ENCODE measurements at regions of chr10 and their contacts with region 1.

Region 1: GRCh38 chr10:102009801-102010425 is 46.1 kb downstream of the ARMH3 start:
- DNase-seq: peak; percentile 72
- CTCF ChIP-seq: peak; percentile 94

Region 2: GRCh38 chr10:101830322-101831168 is 179.4 kb before region 1 on chr10:
- CTCF ChIA-PET with region 1: interaction called, 831 read pairs
- POLR2A ChIA-PET with region 1: no interaction called
- DNase-seq: peak; percentile 88
- CTCF ChIP-seq: no peak

Region 3: DNA sequence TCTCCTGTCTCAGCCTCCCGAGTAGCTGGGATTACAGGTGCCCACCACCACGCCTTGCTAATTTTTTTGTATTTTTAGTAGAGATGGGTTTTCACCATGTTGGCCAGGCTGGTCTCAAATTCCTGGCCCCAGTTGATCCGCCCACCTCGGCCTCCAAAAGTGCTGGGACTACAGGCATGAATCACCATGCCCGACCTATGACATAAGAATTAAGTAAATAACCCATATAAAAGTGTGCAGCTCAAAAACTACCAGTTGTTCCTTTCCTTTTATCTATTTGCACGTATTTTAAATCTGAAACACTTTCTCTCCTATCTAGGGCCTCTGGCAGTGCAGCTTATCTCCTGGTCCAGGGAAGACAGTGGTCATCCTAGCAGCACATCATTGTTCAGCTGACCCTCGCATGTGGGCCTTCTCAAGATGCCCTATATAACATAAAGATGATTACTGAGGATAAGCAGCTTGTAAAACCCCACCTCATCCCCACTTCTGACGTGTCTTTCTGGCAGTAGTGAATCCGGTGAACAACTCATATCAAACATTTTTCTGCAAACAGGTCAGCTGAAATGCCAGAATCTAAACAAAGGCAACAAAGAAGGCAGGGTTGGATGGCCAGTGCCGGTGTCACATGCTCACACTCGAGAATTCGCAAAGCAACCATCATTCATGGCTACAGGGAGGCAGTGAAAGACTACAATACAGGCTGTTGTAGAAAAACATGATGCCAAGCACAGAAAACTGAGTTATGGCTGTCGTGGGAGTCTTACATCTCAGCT is 130.3 kb before region 1 on chr10:
- CTCF ChIA-PET with region 1: interaction called, 30 read pairs
- POLR2A ChIA-PET with region 1: no interaction called
- DNase-seq: no peak
- CTCF ChIP-seq: no peak

Region 4: DNA sequence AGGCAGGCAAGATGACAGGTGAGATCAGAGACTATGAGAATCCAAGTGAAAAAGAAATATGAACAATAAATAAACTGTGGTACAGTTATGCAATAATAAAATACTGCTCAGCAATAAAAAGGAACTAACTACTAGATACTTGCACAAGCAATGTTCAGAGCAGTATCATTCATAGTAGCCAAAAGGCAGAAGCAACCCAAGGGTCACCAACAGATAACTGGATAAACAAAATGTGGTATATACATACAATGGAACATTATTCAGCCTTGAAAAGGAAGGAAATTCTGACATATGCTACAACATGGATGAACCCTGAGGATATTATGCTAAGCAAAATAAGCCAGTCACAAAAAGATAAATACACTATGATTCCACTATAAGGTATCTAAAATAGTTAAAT is 89.4 kb before region 1 on chr10:
- CTCF ChIA-PET with region 1: interaction called, 11 read pairs
- POLR2A ChIA-PET with region 1: no interaction called
- DNase-seq: no peak
- CTCF ChIP-seq: no peak

Region 5: DNA sequence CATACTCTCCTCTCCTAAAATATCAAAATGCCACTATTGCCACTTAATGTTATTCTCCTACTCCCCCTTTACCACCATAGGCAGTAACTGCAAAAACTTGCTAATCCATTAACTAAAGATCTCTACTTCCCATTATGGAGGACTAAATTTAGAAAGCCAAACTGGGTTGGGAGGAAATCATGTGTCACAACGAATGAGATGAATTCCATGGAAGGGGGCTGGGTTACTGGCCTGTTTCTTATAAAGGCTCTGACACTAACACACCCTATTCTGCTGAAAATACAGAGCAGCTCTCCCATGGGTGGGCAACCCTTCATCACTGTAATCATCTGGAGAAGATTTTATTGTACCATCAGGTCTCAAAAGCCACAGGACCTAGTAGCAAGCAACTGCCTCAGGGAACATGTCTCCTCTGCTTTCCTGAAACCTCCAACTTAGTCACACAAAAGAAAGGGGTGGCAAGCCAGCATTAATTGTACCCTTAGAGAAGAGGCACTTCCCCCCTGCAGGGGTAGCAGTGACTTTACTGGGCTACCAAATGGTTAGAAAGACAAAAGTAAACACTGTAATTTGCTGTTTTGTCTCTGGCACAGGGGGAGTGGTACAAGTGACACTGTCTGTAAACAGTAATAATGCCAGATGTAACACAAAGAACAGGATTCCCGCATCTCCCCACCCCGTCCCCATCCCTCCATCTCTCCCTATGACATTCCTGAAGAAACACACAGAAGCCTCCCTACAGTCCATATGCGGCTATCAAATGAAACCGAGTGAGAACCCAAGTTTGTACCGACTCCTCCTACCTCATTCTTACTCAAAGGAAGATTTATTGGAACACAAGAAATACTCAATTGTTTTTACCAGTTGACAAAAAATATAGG is 35.6 kb before region 1 on chr10:
- CTCF ChIA-PET with region 1: interaction called, 31 read pairs
- POLR2A ChIA-PET with region 1: no interaction called
- DNase-seq: no peak
- CTCF ChIP-seq: no peak

Region 6: DNA sequence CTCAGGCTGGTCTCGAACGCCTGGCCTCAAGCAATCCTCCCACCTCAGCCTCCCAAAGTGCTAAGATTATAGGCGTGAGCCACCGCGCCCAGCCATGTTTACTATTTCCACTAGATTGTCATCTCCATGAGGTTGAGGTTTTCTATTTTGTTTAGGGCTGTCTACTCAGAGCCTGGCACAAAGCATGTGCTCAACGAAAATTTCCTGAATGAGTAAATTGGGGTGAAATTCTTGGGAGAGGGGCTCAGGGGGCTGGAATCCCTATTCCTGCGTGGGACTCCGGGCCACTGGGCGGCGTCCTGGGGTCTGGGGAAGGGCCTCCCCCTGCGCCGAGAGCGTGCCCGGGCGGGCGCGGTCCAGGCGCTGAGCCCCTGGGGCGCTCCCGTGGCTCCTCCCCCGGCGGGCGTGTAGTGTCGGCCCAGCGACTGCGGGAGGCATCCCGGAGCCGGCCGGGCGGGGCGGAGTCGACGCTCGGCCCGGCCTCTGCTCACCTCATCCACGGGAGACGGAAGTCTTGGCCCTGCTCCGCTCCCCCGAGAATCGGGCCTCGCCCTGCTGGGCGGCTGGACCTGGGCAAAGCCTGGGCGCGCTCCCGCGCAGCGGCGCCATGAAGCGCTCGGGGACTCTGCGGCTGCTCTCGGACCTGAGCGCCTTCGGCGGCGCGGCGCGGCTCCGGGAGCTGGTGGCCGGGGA is 55.1 kb after region 1 on chr10 and contains the start of gene HPS6:
- CTCF ChIA-PET with region 1: interaction called, 55 read pairs
- POLR2A ChIA-PET with region 1: no interaction called
- DNase-seq: peak; percentile 98
- CTCF ChIP-seq: peak; percentile 9